Activated CD8-positive, alpha-beta T cell treated with anti-CD3 and anti-CD28 coated beads, Interleukin-2, amount 10 ng/mL, durations not matched to agents 7 days and 5 days (primary cell): ENCODE measurements at regions of chr20 and their contacts with region 1.

Region 1: DNA sequence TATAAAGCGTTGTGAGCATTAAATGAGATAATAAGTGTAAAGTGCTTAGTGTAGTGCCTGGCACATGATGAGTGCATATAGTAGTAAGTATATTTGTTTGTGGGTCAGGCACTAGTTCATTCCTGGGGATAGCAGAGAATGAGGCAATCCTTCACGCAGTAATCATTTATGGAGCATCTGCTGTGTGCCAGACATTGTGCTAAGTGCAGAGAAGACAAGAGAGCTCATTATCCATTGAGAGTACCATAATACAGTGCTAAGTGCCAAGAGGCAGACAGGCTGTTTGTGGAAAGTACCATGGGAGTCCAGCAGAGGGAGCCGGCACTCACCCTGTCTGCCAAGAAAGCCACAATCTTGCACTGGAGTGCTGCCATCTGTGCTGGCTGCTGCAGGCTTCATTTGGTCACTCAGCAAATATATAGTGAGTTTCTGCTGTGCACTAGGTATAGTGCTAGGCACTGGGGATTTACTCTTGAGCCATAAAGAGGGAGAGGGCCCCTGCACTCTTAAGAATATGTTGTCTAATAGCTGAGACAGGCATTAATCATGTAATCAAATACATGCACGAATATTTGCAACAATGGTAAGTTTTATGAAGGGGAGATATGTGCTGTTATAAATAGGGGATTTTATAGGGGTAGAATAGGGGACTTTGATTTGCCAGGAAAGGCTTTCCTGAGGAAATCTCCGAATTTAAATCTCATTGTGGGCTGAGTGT is 12.9 kb upstream of the MROH8 start:
- DNase-seq: peak; percentile 80
- ATAC-seq: peak; percentile 78
- H3K4me3 Mint-ChIP-seq: no peak overlapping the region
- H3K27ac Mint-ChIP-seq: peak overlapping the region; percentile 44
- H3K4me1 Mint-ChIP-seq: peaks cover 73% of the 10 kb centered on the region
- H3K27me3 Mint-ChIP-seq: no peaks in the 10 kb centered on the region

Region 2: GRCh38 chr20:37178839-37179670 is 13.2 kb before region 1 on chr20 and contains the starts of genes MROH8 and RPN2:
- CTCF ChIA-PET with region 1: interaction called, 89 read pairs
- POLR2A ChIA-PET with region 1: interaction called, 19 read pairs
- DNase-seq: peak; percentile 97
- ATAC-seq: peak; percentile 98
- H3K4me3 Mint-ChIP-seq: peak within 1 kb of the TSS; percentile 95
- H3K27ac Mint-ChIP-seq: peak within 1 kb of the TSS; percentile 97
- H3K4me1 Mint-ChIP-seq: peaks cover 36% of the 10 kb centered on the region
- H3K27me3 Mint-ChIP-seq: no peaks in the 10 kb centered on the region
- total RNA-seq, gene MROH8: 2.6 to 2.8 TPM
- total RNA-seq, gene RPN2: 163 to 165 TPM

Region 3: GRCh38 chr20:37209661-37210314 is 17.5 kb after region 1 on chr20:
- CTCF ChIA-PET with region 1: interaction called, 18 read pairs
- POLR2A ChIA-PET with region 1: no interaction called
- DNase-seq: no peak
- ATAC-seq: no peak
- H3K4me3 Mint-ChIP-seq: no peak overlapping the region
- H3K27ac Mint-ChIP-seq: no peak overlapping the region
- H3K4me1 Mint-ChIP-seq: no peaks in the 10 kb centered on the region
- H3K27me3 Mint-ChIP-seq: no peaks in the 10 kb centered on the region

Region 4: GRCh38 chr20:37270576-37271420 is 78.5 kb after region 1 on chr20:
- CTCF ChIA-PET with region 1: interaction called, 12 read pairs
- POLR2A ChIA-PET with region 1: no interaction called
- DNase-seq: no peak
- ATAC-seq: no peak
- H3K4me3 Mint-ChIP-seq: no peak overlapping the region
- H3K27ac Mint-ChIP-seq: no peak overlapping the region
- H3K4me1 Mint-ChIP-seq: peaks cover 7% of the 10 kb centered on the region
- H3K27me3 Mint-ChIP-seq: no peaks in the 10 kb centered on the region